Left ventricle myocardium superior (tissue), 1 donor: ENCODE measurements at regions of chr3 and their contacts with region 1.

Region 1: GRCh38 chr3:29764603-29765254 is 483.9 kb downstream of the RBMS3 start:
- DNase-seq: no peak
- ATAC-seq: peak; percentile 77

Region 2: DNA sequence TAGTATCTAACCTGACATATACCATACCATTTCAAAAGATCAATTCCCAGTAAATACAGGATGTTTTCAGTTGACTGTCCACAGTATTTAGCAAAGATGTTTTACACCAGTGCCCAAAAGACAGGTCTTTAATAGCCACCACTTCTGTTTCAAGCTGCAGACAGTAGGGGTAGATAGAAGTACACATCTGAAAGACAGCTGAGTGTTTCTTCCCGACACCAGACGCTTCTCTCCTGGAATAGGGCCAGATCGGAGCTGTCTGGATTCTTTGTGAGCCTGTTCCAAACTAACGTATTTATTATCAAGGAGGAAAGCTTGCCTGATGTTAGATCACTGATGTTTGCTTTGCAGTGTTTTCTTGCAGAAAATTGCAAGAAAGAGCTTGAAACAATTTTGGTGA is 619.9 kb before region 1 on chr3:
- intact Hi-C with region 1: loop called (anchors 5 kb)
- DNase-seq: peak; percentile 30
- ATAC-seq: peak; percentile 85

Region 3: GRCh38 chr3:29280404-29281093 is 484.2 kb before region 1 on chr3 and contains the start of gene RBMS3:
- intact Hi-C with region 1: loop called (anchors 10 kb)
- DNase-seq: peak; percentile 84
- ATAC-seq: peak; percentile 92
- total RNA-seq, gene RBMS3: 20.7 TPM

Region 4: DNA sequence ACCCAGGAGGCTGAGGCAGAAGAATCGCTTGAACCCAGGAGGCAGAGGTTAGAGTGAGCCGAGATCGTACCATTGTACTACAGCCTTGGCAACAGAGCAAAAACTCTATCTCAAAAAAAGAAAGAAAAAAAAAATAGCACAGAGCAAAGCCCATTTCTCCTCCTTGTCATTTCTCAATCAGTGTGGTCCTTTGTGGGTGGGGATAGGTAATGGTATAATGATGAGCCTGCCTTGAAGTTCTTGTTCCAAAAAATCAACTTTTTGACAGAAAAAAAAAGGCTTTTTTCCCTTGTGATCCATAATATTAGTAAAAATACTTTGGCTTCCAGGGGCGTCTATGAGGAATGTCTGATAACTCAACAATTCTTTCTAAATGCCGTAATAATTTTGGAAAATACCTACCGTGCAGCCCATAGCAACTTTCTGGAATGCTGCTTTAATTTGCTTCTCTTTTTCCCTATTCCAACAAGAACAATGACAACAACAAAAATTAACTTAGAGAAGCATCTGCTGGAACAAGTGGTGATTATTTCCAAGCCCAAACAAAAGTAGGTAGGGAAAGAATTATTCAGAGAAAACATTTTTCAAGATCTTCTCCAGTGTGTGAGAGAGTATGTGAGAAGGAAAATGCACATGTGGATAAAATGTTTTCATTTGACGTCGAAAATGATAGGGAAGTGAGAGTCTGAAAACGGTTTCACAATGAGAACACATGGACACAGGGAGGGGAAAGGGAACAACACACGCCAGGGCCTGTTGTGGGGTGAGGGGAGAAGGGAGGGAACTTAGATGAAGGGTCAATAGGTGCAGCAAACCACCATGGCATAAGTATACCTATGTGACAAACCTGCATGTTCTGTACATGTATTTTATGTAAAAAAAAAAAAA is 146.1 kb before region 1 on chr3:
- intact Hi-C with region 1: no loop called
- DNase-seq: no peak
- ATAC-seq: peak; percentile 83

Region 5: DNA sequence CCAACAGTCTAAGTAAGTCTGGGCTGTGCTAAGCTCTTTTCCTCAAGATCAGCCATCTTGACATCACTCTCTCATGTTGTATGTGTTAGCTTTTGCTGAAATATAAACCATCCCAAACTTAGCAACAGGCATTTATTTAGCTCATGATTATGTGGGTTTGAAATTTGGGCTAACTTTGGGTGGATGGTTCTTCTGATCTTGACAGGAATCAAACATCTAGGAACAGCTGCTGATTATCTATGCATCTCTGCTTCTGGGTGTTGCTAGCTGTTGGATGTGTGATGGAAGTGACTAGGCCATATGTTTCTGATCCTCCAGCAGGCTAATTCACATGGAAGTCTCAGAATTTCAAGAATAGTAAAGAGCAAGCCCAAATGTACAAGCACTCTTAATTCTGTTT is 226.5 kb after region 1 on chr3:
- intact Hi-C with region 1: no loop called
- DNase-seq: no peak
- ATAC-seq: no peak